ENCODE measurements at regions of chrX and their contacts with region 1.

Region 1: GRCh38 chrX:115642895-115643530 is 82.0 kb downstream of the PLS3 start:
- H3K4me3 ChIP-seq: no peak overlapping the region
- H3K27ac ChIP-seq: no peak overlapping the region
- H3K4me1 ChIP-seq: no peaks in the 10 kb centered on the region
- CTCF ChIP-seq: peak; percentile 47; the same call in 1 of the 2 replicates

Region 2: DNA sequence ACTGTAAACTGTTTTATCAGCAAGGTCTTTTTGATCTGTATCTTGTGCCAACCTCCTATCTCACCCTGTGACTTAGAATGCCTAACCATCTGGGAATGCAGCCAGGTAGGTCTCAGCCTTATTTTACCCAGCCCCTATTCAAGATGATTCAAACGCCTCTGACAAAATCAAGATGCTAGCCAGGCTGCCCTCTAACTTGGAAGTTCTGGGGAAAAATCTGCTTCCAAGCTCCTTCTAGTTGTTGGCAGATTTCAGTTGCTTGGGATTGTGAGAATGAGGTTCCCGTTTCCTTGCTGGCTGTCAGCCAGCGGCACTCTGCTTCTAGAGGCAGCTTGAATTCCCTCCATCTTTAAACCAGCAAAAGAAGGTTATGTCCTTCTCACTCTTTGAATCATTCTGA is 318.8 kb before region 1 on chrX:
- CTCF ChIA-PET with region 1: interaction called, 44 read pairs
- POLR2A ChIA-PET with region 1: no interaction called
- H3K4me3 ChIP-seq: no peak overlapping the region
- H3K27ac ChIP-seq: no peak overlapping the region
- H3K4me1 ChIP-seq: no peaks in the 10 kb centered on the region
- CTCF ChIP-seq: no peak

Region 3: GRCh38 chrX:115330498-115331168 is 312.4 kb before region 1 on chrX:
- CTCF ChIA-PET with region 1: interaction called, 44 read pairs
- POLR2A ChIA-PET with region 1: no interaction called
- H3K4me3 ChIP-seq: no peak overlapping the region
- H3K27ac ChIP-seq: no peak overlapping the region
- H3K4me1 ChIP-seq: no peaks in the 10 kb centered on the region
- CTCF ChIP-seq: peak; percentile 70

Region 4: GRCh38 chrX:115408771-115409400 is 234.1 kb before region 1 on chrX:
- CTCF ChIA-PET with region 1: no interaction called
- POLR2A ChIA-PET with region 1: no interaction called
- H3K4me3 ChIP-seq: no peak overlapping the region
- H3K27ac ChIP-seq: no peak overlapping the region
- H3K4me1 ChIP-seq: no peaks in the 10 kb centered on the region
- CTCF ChIP-seq: no peak

Region 5: DNA sequence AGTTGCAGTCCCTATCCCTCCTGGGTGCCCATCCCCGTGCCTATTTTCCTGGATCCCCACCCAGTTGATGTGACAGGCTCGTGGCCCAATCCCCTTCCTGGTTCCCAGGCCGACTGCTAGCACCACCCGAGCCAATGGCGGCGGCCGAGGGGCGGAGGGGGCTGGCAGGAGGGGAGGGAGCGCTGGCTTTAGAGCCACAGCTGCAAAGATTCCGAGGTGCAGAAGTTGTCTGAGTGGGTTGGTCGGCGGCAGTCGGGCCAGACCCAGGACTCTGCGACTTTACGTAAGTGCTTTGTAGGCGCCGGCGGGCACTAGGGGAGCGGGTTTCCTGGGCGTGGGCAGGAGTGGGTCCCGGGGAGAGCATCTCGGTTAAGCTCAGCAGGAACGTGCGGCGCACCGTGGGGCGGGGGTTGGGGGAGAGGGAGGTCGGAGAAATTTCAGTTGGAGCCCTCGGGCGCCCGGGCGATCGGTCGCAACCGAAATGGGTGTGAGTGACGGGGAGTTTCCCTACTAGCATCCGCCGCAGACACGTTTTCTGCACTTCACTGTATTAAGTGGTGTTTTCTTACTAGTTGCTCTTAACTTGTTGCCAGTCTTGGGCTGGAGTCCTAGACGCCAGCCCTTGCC is 81.9 kb before region 1 on chrX and contains the start of gene PLS3:
- CTCF ChIA-PET with region 1: interaction called, 13 read pairs
- POLR2A ChIA-PET with region 1: no interaction called
- H3K4me3 ChIP-seq: peak within 1 kb of the TSS; percentile 91
- H3K27ac ChIP-seq: peak within 1 kb of the TSS; percentile 95
- H3K4me1 ChIP-seq: peaks cover 4% of the 10 kb centered on the region; the same call in 1 of the 2 replicates
- CTCF ChIP-seq: peak; percentile 39; the same call in 1 of the 2 replicates

Region 6: DNA sequence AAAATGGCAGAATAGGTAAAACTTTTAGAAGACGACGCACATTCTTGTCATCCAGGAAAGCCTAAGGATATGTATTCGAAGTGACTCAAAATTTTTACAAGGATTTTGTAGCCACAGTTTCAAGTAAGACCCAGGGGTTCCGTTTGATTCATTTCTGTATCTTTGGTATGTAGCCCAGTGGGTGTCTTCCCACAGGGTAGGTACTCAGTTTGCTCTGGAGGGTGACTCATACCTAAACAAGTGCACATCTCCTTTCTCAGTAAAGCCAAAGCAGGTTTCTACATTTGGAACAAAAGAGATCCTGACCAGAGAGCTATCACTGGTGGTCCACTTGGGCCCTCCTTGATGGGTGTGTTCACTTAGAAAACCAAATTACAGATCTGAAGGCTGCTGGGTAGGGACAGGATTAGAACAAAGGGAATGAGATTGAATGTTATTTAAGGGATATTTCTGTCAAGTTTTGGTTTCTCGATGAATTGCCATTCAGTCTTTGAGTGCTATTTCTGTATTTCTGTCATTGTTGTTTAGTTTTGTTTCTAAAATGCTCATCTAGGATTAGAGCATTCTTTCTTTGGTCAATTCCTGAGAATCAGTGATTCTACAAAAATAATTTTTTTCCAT is 26.0 kb before region 1 on chrX:
- CTCF ChIA-PET with region 1: interaction called, 12 read pairs
- POLR2A ChIA-PET with region 1: no interaction called
- H3K4me3 ChIP-seq: no peak overlapping the region
- H3K27ac ChIP-seq: no peak overlapping the region
- H3K4me1 ChIP-seq: peaks cover 12% of the 10 kb centered on the region
- CTCF ChIP-seq: no peak

Region 7: GRCh38 chrX:115630204-115630603 is 12.8 kb before region 1 on chrX:
- CTCF ChIA-PET with region 1: interaction called, 25 read pairs
- POLR2A ChIA-PET with region 1: no interaction called
- H3K4me3 ChIP-seq: no peak overlapping the region
- H3K27ac ChIP-seq: no peak overlapping the region
- H3K4me1 ChIP-seq: no peaks in the 10 kb centered on the region
- CTCF ChIP-seq: no peak

Region 8: DNA sequence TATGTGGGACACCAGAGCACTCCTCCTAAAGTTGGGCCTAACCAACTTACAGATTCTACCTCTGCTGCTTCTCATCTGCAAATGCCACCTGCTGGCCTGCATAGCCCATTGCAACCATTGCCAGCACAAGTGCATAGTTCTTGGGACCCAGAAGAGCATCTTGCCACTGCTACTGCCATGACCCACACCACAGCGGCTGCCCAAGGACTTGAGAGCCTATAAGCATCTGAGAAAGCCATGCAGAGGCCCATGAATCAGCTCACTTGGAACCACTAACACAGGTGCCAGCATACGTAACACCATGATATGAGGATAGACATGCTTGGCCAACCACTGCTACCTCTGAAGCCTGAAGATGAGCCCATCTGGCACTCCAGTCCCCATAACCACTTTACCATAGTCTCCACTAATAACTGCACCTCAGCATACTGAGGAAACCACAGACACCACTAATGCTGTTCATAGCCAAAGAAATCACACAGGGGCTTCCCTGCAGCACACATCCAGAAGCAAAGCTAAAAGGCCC is 269.4 kb after region 1 on chrX:
- CTCF ChIA-PET with region 1: no interaction called
- POLR2A ChIA-PET with region 1: no interaction called
- H3K4me3 ChIP-seq: no peak overlapping the region
- H3K27ac ChIP-seq: no peak overlapping the region
- H3K4me1 ChIP-seq: no peaks in the 10 kb centered on the region
- CTCF ChIP-seq: peak; percentile 31